WTC11 (cell line): ENCODE measurements at regions of chr17 and their contacts with region 1.

Region 1: GRCh38 chr17:28484296-28484695 is 10.9 kb downstream of the SLC13A2 start:
- DNase-seq: no peak
- ATAC-seq: no peak
- H3K4me3 Mint-ChIP-seq: no peak overlapping the region
- H3K27ac Mint-ChIP-seq: no peak overlapping the region
- H3K4me1 Mint-ChIP-seq: peaks cover 14% of the 10 kb centered on the region
- H3K27me3 Mint-ChIP-seq: no peaks in the 10 kb centered on the region
- CTCF ChIP-seq: no peak

Region 2: GRCh38 chr17:28494445-28495188 is 10.3 kb after region 1 on chr17:
- CTCF ChIA-PET with region 1: interaction called, 10 read pairs
- POLR2A ChIA-PET with region 1: no interaction called
- DNase-seq: peak; percentile 89
- ATAC-seq: peak; percentile 74
- H3K4me3 Mint-ChIP-seq: no peak overlapping the region
- H3K27ac Mint-ChIP-seq: no peak overlapping the region
- H3K4me1 Mint-ChIP-seq: peaks cover 12% of the 10 kb centered on the region
- H3K27me3 Mint-ChIP-seq: peaks cover 5% of the 10 kb centered on the region
- CTCF ChIP-seq: peak; percentile 88

Region 3: DNA sequence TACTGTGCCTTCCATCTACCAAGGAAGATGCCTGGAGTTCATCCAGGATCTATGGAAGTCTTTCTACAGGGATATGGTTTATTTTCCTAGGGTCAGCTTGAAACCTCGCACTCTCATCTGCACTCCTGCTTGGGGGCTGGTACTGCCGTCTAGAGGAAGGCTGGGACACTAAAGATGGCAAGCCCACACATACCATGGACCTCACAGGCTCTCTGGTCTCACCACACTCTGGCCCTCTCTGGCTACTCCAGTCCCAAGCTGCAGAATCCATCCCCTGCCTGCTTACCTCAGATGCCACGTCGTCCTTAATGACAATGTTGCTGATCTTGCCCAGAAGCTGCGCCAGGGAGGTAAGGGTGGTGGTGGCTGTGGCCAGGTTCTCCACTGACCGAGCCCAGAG is 70.3 kb after region 1 on chr17:
- CTCF ChIA-PET with region 1: no interaction called
- POLR2A ChIA-PET with region 1: no interaction called
- DNase-seq: no peak
- ATAC-seq: no peak
- H3K4me3 Mint-ChIP-seq: no peak overlapping the region
- H3K27ac Mint-ChIP-seq: no peak overlapping the region; the same call in 1 of the 2 replicates
- H3K4me1 Mint-ChIP-seq: peaks cover 14% of the 10 kb centered on the region
- H3K27me3 Mint-ChIP-seq: no peaks in the 10 kb centered on the region
- CTCF ChIP-seq: no peak